GM12878 (cell line): ENCODE measurements at regions of chr17 and their contacts with region 1.

Region 1: GRCh38 chr17:59427425-59427921 is 96.0 kb downstream of the YPEL2 start:
- DNase-seq: no peak
- ATAC-seq: peak; percentile 73
- H3K4me3 ChIP-seq: no peak overlapping the region
- H3K27ac ChIP-seq: no peak overlapping the region
- H3K4me1 ChIP-seq: peaks cover 14% of the 10 kb centered on the region
- H3K27me3 ChIP-seq: no peaks in the 10 kb centered on the region
- CTCF ChIP-seq: peak in 1 of 3 experiments; percentile 23; a peak in 2 of 6 replicates
- EP300 ChIP-seq: 0 out of 4 replicates have a peak, but pooled peaks of 1 of the 2 experiments have one; percentile 23
- POLR2A ChIP-seq: no peak
- RAD21 ChIP-seq: peak; percentile 38; the same call in 1 of the 2 replicates

Region 2: GRCh38 chr17:58703137-58703972 is 724.1 kb before region 1 on chr17:
- CTCF ChIA-PET with region 1: no interaction called
- POLR2A ChIA-PET with region 1: interaction called, 10 read pairs
- RAD21 ChIA-PET with region 1: no interaction called
- SMC1A ChIA-PET with region 1: no interaction called
- in situ Hi-C with region 1: no loop called
- intact Hi-C with region 1: no loop called
- DNase-seq: no peak
- ATAC-seq: 0 out of 3 replicates have a peak, but pooled peaks have one; percentile 3
- H3K4me3 ChIP-seq: no peak overlapping the region
- H3K27ac ChIP-seq: peak overlapping the region; percentile 78; the same call in 1 of the 2 replicates
- H3K4me1 ChIP-seq: peaks cover 41% of the 10 kb centered on the region
- H3K27me3 ChIP-seq: no peaks in the 10 kb centered on the region
- CTCF ChIP-seq: no peak
- EP300 ChIP-seq: no peak
- POLR2A ChIP-seq: no peak
- RAD21 ChIP-seq: no peak

Region 3: GRCh38 chr17:59331129-59331928 is 96.1 kb before region 1 on chr17 and contains the start of gene YPEL2:
- CTCF ChIA-PET with region 1: interaction called, 117 read pairs
- POLR2A ChIA-PET with region 1: interaction called, 7 read pairs
- RAD21 ChIA-PET with region 1: interaction called, 37 read pairs
- SMC1A ChIA-PET with region 1: interaction called, 47 read pairs
- in situ Hi-C with region 1: no loop called
- intact Hi-C with region 1: no loop called
- DNase-seq: peak; percentile 41
- ATAC-seq: peak; percentile 97
- H3K4me3 ChIP-seq: peak within 1 kb of the TSS; percentile 76
- H3K27ac ChIP-seq: no peak within 1 kb of the TSS
- H3K4me1 ChIP-seq: peaks cover 17% of the 10 kb centered on the region
- H3K27me3 ChIP-seq: peaks cover 0 to 7% of the 10 kb centered on the region in 2 experiments; a peak in 2 of 4 replicates
- CTCF ChIP-seq: no peak
- EP300 ChIP-seq: no peak
- POLR2A ChIP-seq: peak; percentile 51; the same call in 1 of the 2 replicates
- RAD21 ChIP-seq: no peak
- polyA plus RNA-seq, gene YPEL2: 0.11 to 0.18 TPM

Region 4: DNA sequence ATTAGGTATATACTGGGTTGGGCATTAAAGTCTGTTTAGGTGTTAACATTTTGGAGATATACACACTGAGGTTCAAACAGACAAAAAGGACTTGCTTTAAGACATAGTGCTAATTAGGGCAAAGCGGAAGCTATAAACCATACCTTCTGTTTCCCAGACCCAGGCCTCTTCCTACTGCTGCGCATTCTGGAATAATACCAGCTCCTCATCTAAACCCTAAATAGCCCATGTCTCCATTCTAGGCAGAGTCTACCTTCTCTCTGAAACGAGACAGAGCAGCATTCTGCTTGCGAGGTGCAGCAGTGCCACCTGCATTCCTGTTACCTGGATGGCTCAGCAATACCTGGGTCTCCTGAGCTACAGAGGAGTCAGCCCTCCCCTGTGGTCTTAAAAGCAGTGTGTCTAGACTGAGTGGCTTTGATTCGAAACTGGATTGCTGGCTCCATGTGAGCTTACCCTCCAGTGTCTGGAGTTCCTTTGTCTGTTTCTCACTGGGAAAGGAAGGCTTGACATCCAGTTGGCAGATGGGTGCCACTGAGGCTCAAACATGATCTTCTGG is 89.7 kb before region 1 on chr17:
- CTCF ChIA-PET with region 1: interaction called, 12 read pairs
- POLR2A ChIA-PET with region 1: no interaction called
- RAD21 ChIA-PET with region 1: interaction called, 6 read pairs
- SMC1A ChIA-PET with region 1: interaction called, 7 read pairs
- in situ Hi-C with region 1: no loop called
- intact Hi-C with region 1: no loop called
- DNase-seq: no peak
- ATAC-seq: no peak
- H3K4me3 ChIP-seq: no peak overlapping the region
- H3K27ac ChIP-seq: no peak overlapping the region
- H3K4me1 ChIP-seq: peaks cover 4% of the 10 kb centered on the region
- H3K27me3 ChIP-seq: peaks cover 0 to 4% of the 10 kb centered on the region in 2 experiments; a peak in 2 of 4 replicates
- CTCF ChIP-seq: no peak
- EP300 ChIP-seq: no peak
- POLR2A ChIP-seq: no peak
- RAD21 ChIP-seq: no peak

Region 5: DNA sequence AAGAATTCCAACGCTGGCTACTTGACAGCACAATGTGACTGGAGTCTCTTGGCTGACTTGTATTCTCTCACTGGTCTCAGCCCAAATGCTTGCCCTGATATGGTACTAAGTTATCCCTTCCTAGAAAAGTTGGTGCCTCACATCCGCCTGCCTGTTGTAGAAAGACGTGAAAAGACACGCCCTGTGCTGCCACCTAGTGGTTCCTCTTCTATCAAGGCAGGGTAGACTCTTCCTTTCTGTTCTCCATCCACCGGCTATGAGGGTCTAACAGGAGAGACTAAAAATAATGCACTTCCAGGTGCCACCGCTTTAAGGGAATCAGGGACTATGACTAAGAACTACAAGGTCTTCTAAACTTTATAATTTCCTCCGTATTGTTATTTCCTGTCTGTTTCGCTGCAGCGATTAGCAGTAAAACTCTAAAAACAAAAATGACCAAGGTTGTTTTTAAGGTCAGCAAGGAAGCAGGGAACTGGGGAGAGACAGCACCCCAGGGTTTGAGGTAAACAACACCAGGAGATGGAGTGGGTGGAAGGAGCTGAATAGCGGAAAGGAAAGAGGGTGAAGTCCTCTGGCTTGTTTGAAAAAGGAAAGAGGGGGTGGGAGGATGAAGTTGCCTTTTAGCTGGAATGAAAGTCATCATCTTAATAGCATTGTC is 13.4 kb after region 1 on chr17:
- CTCF ChIA-PET with region 1: interaction called, 125 read pairs
- POLR2A ChIA-PET with region 1: interaction called, 3 read pairs
- RAD21 ChIA-PET with region 1: interaction called, 51 read pairs
- SMC1A ChIA-PET with region 1: interaction called, 104 read pairs
- in situ Hi-C with region 1: no loop called
- intact Hi-C with region 1: no loop called
- DNase-seq: peak; percentile 68
- ATAC-seq: peak; percentile 99
- H3K4me3 ChIP-seq: peak overlapping the region; percentile 34; the same call in 1 of the 2 replicates
- H3K27ac ChIP-seq: no peak overlapping the region
- H3K4me1 ChIP-seq: peaks cover 25% of the 10 kb centered on the region
- H3K27me3 ChIP-seq: no peaks in the 10 kb centered on the region
- CTCF ChIP-seq: peak; percentile 74 to 90 (median 86)
- EP300 ChIP-seq: no peak
- POLR2A ChIP-seq: no peak
- RAD21 ChIP-seq: peak; percentile 97

Region 6: DNA sequence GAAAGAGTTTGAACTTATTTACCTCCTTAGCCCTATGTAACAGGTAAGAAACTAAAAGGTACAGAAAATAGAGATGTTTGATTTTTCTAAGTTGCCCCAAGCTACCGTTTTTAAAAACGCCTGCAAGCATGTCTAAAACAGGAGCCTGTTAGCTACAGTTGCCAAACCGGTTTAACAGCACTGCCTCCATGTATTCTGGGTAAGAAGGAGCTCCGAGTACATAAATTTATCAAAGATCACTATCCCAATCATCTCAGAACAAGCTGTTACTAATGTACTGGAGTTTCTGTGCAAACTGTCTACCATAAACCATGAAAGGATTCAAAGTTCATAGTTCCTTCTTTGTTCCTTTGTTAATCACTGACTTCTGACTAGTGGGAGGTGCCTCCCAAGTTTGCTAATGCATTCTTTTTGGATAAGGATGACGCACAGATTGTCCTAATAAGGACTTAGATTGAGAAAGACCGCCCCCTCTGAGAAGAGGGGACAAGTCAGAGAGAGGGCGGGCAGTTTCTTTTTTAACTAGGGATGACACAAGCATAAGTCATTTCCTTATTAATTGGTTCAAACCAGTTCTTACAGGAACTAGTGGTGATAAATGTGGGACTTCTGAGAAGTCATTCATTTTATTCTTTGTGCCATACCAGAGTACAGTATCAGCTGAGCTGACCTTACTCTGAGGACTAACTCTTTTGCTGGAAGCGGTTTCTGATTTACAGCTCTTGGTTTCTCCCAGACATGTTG is 410.0 kb after region 1 on chr17:
- CTCF ChIA-PET with region 1: no interaction called
- POLR2A ChIA-PET with region 1: interaction called, 10 read pairs
- RAD21 ChIA-PET with region 1: no interaction called
- SMC1A ChIA-PET with region 1: no interaction called
- in situ Hi-C with region 1: no loop called
- intact Hi-C with region 1: no loop called
- DNase-seq: peak; percentile 97
- ATAC-seq: peak; percentile 70
- H3K4me3 ChIP-seq: peak overlapping the region; percentile 91
- H3K27ac ChIP-seq: peak overlapping the region; percentile 97
- H3K4me1 ChIP-seq: peaks cover 35% of the 10 kb centered on the region
- H3K27me3 ChIP-seq: no peaks in the 10 kb centered on the region
- CTCF ChIP-seq: no peak
- EP300 ChIP-seq: peak in 1 of 2 experiments; percentile 70; a peak in 2 of 4 replicates
- POLR2A ChIP-seq: peak; percentile 94
- RAD21 ChIP-seq: no peak